H1 (cell line): ENCODE measurements at regions of chr15 and their contacts with region 1.

Region 1: GRCh38 chr15:64749999-64750657 is 25.3 kb downstream of the RBPMS2 start:
- DNase-seq: peak in 1 of 2 experiments; percentile 47
- H3K4me3 ChIP-seq: no peak overlapping the region
- H3K27ac ChIP-seq: no peak overlapping the region
- H3K4me1 ChIP-seq: peaks cover 0 to 13% (median 9%) of the 10 kb centered on the region in 4 experiments; a peak in 5 of 7 replicates
- H3K27me3 ChIP-seq: no peaks in the 10 kb centered on the region
- CTCF ChIP-seq: peak; percentile 56 to 67 (median 63)
- EP300 ChIP-seq: 0 out of 3 replicates have a peak, but pooled peaks of 1 of the 2 experiments have one; percentile 18
- POLR2A ChIP-seq: no peak
- RAD21 ChIP-seq: peak; percentile 60 to 64

Region 2: DNA sequence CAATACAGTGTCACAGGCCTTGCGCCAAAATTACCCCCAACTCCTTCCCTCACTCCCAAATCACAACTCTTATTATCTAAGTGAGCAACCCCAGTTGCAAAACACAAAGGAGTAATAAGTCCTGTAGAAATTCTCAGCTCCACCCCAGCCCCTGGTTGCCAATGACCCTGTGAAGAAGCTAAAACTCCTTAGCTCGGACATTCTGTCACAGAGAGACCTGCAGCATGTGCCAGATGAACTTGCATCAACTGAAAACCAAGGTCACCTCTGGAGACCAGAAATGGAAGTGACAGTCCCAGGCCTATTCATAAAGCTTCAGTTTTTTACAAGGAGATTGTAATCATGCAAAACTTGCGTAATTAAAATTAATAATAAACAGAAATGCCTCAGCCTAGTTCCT is 29.9 kb before region 1 on chr15:
- CTCF ChIA-PET with region 1: no interaction called
- POLR2A ChIA-PET with region 1: no interaction called
- DNase-seq: no peak
- H3K4me3 ChIP-seq: no peak overlapping the region
- H3K27ac ChIP-seq: no peak overlapping the region
- H3K4me1 ChIP-seq: no peaks in the 10 kb centered on the region
- H3K27me3 ChIP-seq: no peaks in the 10 kb centered on the region
- CTCF ChIP-seq: no peak
- EP300 ChIP-seq: no peak
- POLR2A ChIP-seq: no peak
- RAD21 ChIP-seq: no peak

Region 3: DNA sequence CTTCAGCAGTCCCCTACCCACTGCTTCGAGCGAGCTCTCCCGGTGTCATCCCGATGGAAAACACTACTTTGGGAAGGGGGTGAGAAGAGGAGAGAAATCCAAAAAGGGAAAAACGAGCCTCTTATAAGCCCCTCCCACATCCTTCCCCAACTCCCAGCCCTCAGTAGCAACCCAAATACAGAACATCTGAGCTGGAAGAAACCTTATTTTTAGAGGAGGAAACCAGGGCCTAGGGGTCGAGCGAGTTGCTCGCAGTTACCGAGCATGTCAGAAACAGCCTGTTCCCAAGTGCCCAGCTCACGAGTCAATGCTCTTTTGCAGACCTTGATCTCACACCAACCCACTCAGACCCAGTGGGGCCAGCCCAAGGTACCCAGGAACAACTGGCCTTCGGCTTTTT is 11.0 kb after region 1 on chr15:
- CTCF ChIA-PET with region 1: interaction called, 25 read pairs
- POLR2A ChIA-PET with region 1: interaction called, 51 read pairs
- DNase-seq: no peak
- H3K4me3 ChIP-seq: no peak overlapping the region
- H3K27ac ChIP-seq: no peak overlapping the region
- H3K4me1 ChIP-seq: peaks cover 0 to 29% (median 14%) of the 10 kb centered on the region in 4 experiments; a peak in 5 of 7 replicates
- H3K27me3 ChIP-seq: no peaks in the 10 kb centered on the region
- CTCF ChIP-seq: no peak
- EP300 ChIP-seq: no peak
- POLR2A ChIP-seq: no peak
- RAD21 ChIP-seq: no peak

Region 4: GRCh38 chr15:64767203-64767602 is 17.1 kb after region 1 on chr15:
- CTCF ChIA-PET with region 1: interaction called, 25 read pairs
- POLR2A ChIA-PET with region 1: interaction called, 51 read pairs
- DNase-seq: no peak
- H3K4me3 ChIP-seq: no peak overlapping the region
- H3K27ac ChIP-seq: peak overlapping the region; percentile 20; the same call in 1 of the 2 replicates
- H3K4me1 ChIP-seq: peaks cover 8 to 33% (median 17%) of the 10 kb centered on the region in 4 experiments
- H3K27me3 ChIP-seq: no peaks in the 10 kb centered on the region
- CTCF ChIP-seq: no peak
- EP300 ChIP-seq: no peak
- POLR2A ChIP-seq: no peak
- RAD21 ChIP-seq: peak; percentile 5 to 18; a peak in 1 of 4 replicates

Region 5: DNA sequence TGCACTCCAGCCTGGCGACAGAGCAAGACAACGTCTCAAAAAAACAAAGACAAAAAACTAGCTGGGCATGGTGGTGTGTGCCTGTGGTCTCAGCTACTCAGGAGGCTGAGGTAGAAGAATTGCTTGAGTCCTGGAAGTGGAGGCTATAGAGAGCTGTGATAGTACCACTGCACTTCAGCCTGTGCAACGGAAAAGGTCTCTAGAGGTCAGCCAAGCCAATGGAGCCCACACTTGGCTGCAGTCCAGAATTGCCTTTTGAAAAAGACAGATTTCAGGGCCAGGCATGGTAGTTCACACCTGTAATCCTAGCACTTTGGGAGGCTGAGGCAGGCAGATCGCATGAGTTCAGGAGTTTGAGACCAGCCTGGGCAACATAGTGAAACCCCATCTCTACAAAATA is 33.7 kb after region 1 on chr15:
- CTCF ChIA-PET with region 1: interaction called, 10 read pairs
- POLR2A ChIA-PET with region 1: interaction called, 3 read pairs
- DNase-seq: no peak
- H3K4me3 ChIP-seq: no peak overlapping the region
- H3K27ac ChIP-seq: no peak overlapping the region
- H3K4me1 ChIP-seq: peaks cover 1 to 13% (median 9%) of the 10 kb centered on the region in 4 experiments; a peak in 6 of 7 replicates
- H3K27me3 ChIP-seq: no peaks in the 10 kb centered on the region
- CTCF ChIP-seq: no peak
- EP300 ChIP-seq: no peak
- POLR2A ChIP-seq: no peak
- RAD21 ChIP-seq: no peak

Region 6: GRCh38 chr15:64836023-64836536 is 86.0 kb after region 1 on chr15:
- CTCF ChIA-PET with region 1: interaction called, 10 read pairs
- POLR2A ChIA-PET with region 1: no interaction called
- DNase-seq: no peak
- H3K4me3 ChIP-seq: 0 out of 8 replicates have a peak overlapping the region, but pooled peaks of 1 of the 4 experiments have one; percentile 7
- H3K27ac ChIP-seq: no peak overlapping the region
- H3K4me1 ChIP-seq: peaks cover 0 to 7% (median 4%) of the 10 kb centered on the region in 4 experiments; a peak in 5 of 7 replicates
- H3K27me3 ChIP-seq: no peaks in the 10 kb centered on the region
- CTCF ChIP-seq: no peak
- EP300 ChIP-seq: no peak
- POLR2A ChIP-seq: no peak
- RAD21 ChIP-seq: no peak

Region 7: GRCh38 chr15:64865998-64866520 is 115.9 kb after region 1 on chr15:
- CTCF ChIA-PET with region 1: no interaction called
- POLR2A ChIA-PET with region 1: no interaction called
- DNase-seq: peak in 1 of 2 experiments; percentile 79
- H3K4me3 ChIP-seq: no peak overlapping the region
- H3K27ac ChIP-seq: peak overlapping the region; percentile 50; the same call in 1 of the 2 replicates
- H3K4me1 ChIP-seq: peaks cover 5 to 25% (median 15%) of the 10 kb centered on the region in 4 experiments
- H3K27me3 ChIP-seq: no peaks in the 10 kb centered on the region
- CTCF ChIP-seq: no peak
- EP300 ChIP-seq: 0 out of 3 replicates have a peak, but pooled peaks of 1 of the 2 experiments have one; percentile 9
- POLR2A ChIP-seq: no peak
- RAD21 ChIP-seq: peak in 1 of 2 experiments; percentile 16; a peak in 2 of 4 replicates